Astrocyte of the cerebellum (primary cell): ENCODE measurements at regions of chr2 and their contacts with region 1.

Region 1: GRCh38 chr2:157777427-157777826 is 98.7 kb downstream of the ACVR1 start:
- DNase-seq: peak; percentile 46
- H3K4me3 ChIP-seq: no peak overlapping the region
- CTCF ChIP-seq: peak; percentile 65

Region 2: GRCh38 chr2:157866202-157866601 is 88.8 kb after region 1 on chr2:
- in situ Hi-C with region 1: no loop called
- DNase-seq: peak; percentile 33
- H3K4me3 ChIP-seq: no peak overlapping the region
- CTCF ChIP-seq: no peak

Region 3: DNA sequence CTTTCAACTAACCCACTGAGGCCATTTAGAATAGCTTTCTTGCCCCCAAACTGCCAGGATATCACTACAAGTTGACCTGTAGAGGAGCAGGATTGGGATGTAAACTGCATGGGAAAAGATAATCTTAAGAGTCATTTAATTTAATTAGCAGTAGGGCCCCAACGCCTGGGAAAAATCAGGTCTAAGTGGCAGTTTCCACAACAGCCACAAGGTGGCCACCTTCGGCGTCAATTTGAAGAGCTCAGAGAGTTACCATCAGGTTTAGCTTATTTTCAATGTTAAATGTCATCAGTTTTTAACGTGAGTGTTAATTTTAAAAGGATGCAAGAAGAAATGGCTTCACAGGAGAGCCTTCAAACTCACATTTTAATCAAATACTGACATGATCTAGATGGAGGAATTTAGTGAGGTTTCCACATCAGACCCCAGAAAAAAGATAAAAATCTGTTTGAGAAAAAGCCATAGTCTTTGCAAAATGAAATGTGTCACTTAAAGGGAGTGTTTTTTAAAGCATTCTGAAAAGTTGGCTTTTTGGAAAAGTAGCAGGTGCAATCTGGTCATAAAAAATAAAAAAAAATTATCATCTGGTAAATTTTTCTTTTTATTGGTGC is 247.0 kb after region 1 on chr2:
- in situ Hi-C with region 1: loop called (anchors 25 kb)
- DNase-seq: peak; percentile 13
- H3K4me3 ChIP-seq: no peak overlapping the region
- CTCF ChIP-seq: peak; percentile 88